CD8-positive, alpha-beta T cell (primary cell): ENCODE measurements at regions of chr1 and their contacts with region 1.

Region 1: DNA sequence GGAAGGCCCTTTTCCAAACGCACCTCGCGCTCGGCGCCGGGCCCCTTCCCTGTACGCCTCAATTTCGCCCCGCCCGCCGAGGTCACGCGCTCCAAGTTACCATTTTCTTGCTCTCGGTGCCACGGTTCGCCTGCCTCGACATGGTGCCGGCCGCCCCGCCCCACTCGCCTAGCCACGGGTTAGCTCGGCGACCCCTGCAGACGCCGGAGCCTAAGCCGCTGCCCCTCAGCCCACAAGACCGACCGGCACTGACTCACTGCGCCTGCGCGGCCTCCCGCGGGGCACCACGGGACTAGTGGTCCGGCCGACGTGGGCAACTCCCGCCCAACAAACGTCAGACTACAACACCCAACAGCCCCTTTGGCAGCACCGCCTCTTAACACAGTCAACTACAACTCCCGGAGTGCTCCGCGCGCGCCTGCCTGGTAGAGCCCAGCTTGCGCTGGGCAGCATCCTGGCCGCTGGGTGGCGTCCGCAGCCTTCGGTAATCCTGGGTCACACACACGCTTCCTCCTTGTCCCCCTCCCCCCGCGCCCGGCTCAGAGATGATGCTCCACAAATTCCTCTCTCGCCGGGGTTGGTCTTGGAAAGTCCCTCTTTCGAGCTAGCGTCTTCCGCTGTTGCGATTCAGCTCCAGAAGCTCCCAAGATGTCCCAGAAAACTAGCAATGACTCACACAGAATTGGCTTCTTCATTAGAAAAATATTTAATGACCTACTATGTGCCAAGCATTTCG is at the start of gene TRAPPC3:
- DNase-seq: peak; percentile 98 to 100 (median 99)
- ATAC-seq: peak; percentile 90
- H3K4me3 ChIP-seq: peak within 1 kb of the TSS; percentile 73 to 84
- H3K4me3 Mint-ChIP-seq: peak within 1 kb of the TSS; percentile 99
- H3K27ac ChIP-seq: peak within 1 kb of the TSS; percentile 69 to 94
- H3K27ac Mint-ChIP-seq: peak within 1 kb of the TSS; percentile 100
- H3K4me1 ChIP-seq: peaks cover 51% of the 10 kb centered on the region
- H3K4me1 Mint-ChIP-seq: peaks cover 73% of the 10 kb centered on the region
- H3K27me3 ChIP-seq: no peaks in the 10 kb centered on the region
- H3K27me3 Mint-ChIP-seq: no peaks in the 10 kb centered on the region
- CTCF ChIP-seq: peak; percentile 73
- total RNA-seq, gene TRAPPC3: 18.4 to 21.6 TPM

Region 2: GRCh38 chr1:35737120-35737519 is 412.3 kb before region 1 on chr1:
- CTCF ChIA-PET with region 1: no interaction called
- POLR2A ChIA-PET with region 1: no interaction called
- intact Hi-C with region 1: no loop called
- DNase-seq: no peak
- ATAC-seq: no peak
- H3K4me3 ChIP-seq: no peak overlapping the region
- H3K4me3 Mint-ChIP-seq: no peak overlapping the region
- H3K27ac ChIP-seq: no peak overlapping the region
- H3K27ac Mint-ChIP-seq: no peak overlapping the region
- H3K4me1 ChIP-seq: no peaks in the 10 kb centered on the region
- H3K4me1 Mint-ChIP-seq: no peaks in the 10 kb centered on the region
- H3K27me3 ChIP-seq: no peaks in the 10 kb centered on the region
- H3K27me3 Mint-ChIP-seq: no peaks in the 10 kb centered on the region
- CTCF ChIP-seq: no peak

Region 3: DNA sequence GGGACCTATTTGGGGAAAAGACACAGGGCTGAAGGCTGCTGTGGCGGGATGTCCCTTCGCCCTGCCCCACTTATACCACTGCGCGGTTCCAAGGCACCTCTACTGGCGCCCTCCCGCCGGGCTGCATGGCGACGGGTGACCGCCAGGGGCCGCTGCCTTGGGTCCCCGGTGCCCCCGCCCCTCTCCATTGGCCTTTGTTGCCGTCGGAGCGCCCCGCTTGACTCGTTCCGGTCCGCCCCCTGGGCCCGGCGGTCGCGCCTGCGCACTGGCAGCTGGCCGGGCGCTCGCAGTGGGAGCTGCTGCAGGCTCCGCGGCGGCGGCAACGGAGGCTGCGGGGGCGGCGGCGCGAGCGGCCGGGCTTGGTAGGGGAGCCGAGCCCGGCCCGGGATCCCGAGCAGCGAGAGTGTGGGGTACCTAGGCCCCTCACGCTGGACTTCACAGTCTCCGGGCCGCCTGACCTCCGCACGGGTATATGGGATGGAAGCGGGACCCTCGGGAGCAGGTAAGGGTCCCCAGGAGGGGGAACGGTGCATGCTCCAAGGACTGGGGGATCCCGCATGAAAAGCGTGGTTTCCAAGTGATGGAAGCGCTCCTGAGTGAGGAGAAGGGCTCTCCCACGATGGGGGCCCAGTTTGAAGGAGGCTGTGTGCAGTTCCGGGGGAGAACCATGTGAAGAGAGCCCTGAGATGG is 266.3 kb before region 1 on chr1 and contains the start of gene AGO1:
- CTCF ChIA-PET with region 1: no interaction called
- POLR2A ChIA-PET with region 1: no interaction called
- intact Hi-C with region 1: loop called in 1 of 2 experiments (anchors 2 kb)
- DNase-seq: peak; percentile 94 to 99 (median 97)
- ATAC-seq: peak; percentile 99
- H3K4me3 ChIP-seq: peak within 1 kb of the TSS; percentile 99 to 100
- H3K4me3 Mint-ChIP-seq: peak within 1 kb of the TSS; percentile 92
- H3K27ac ChIP-seq: peak within 1 kb of the TSS; percentile 59 to 68
- H3K27ac Mint-ChIP-seq: peak within 1 kb of the TSS; percentile 69
- H3K4me1 ChIP-seq: peaks cover 23% of the 10 kb centered on the region
- H3K4me1 Mint-ChIP-seq: peaks cover 52% of the 10 kb centered on the region
- H3K27me3 ChIP-seq: peaks cover 0 to 3% of the 10 kb centered on the region in 2 experiments
- H3K27me3 Mint-ChIP-seq: peaks cover 3% of the 10 kb centered on the region
- CTCF ChIP-seq: peak; percentile 77
- total RNA-seq, gene AGO1: 15.8 TPM

Region 4: GRCh38 chr1:36099681-36100341 is 49.6 kb before region 1 on chr1:
- CTCF ChIA-PET with region 1: interaction called, 15 read pairs
- POLR2A ChIA-PET with region 1: interaction called, 4 read pairs
- intact Hi-C with region 1: loop called (anchors 1 kb)
- DNase-seq: peak; percentile 55 to 89 (median 80)
- ATAC-seq: peak; percentile 88
- H3K4me3 ChIP-seq: peak overlapping the region in 1 of 2 experiments; percentile 7
- H3K4me3 Mint-ChIP-seq: no peak overlapping the region
- H3K27ac ChIP-seq: no peak overlapping the region
- H3K27ac Mint-ChIP-seq: no peak overlapping the region
- H3K4me1 ChIP-seq: peaks cover 8% of the 10 kb centered on the region
- H3K4me1 Mint-ChIP-seq: peaks cover 4% of the 10 kb centered on the region
- H3K27me3 ChIP-seq: no peaks in the 10 kb centered on the region
- H3K27me3 Mint-ChIP-seq: no peaks in the 10 kb centered on the region
- CTCF ChIP-seq: peak; percentile 83

Region 5: GRCh38 chr1:36160949-36161485 is 11.6 kb after region 1 on chr1:
- CTCF ChIA-PET with region 1: interaction called, 95 read pairs
- POLR2A ChIA-PET with region 1: interaction called, 78 read pairs
- intact Hi-C with region 1: loop called (anchors 1 kb)
- DNase-seq: peak; percentile 25 to 84 (median 68)
- ATAC-seq: peak; percentile 9
- H3K4me3 ChIP-seq: peak overlapping the region; percentile 52 to 59
- H3K4me3 Mint-ChIP-seq: peak overlapping the region; percentile 76
- H3K27ac ChIP-seq: peak overlapping the region; percentile 87 to 93
- H3K27ac Mint-ChIP-seq: peak overlapping the region; percentile 91
- H3K4me1 ChIP-seq: peaks cover 61% of the 10 kb centered on the region
- H3K4me1 Mint-ChIP-seq: peaks cover 71% of the 10 kb centered on the region
- H3K27me3 ChIP-seq: no peaks in the 10 kb centered on the region
- H3K27me3 Mint-ChIP-seq: no peaks in the 10 kb centered on the region
- CTCF ChIP-seq: no peak

Region 6: GRCh38 chr1:36223993-36224536 is 74.7 kb after region 1 on chr1 and contains the start of gene THRAP3:
- CTCF ChIA-PET with region 1: interaction called, 23 read pairs
- POLR2A ChIA-PET with region 1: interaction called, 26 read pairs
- intact Hi-C with region 1: loop called (anchors 1 kb)
- DNase-seq: peak; percentile 99 to 100 (median 100)
- ATAC-seq: peak; percentile 86
- H3K4me3 ChIP-seq: peak within 1 kb of the TSS; percentile 86 to 87
- H3K4me3 Mint-ChIP-seq: peak within 1 kb of the TSS; percentile 97
- H3K27ac ChIP-seq: peak within 1 kb of the TSS; percentile 97 to 100
- H3K27ac Mint-ChIP-seq: peak within 1 kb of the TSS; percentile 100
- H3K4me1 ChIP-seq: peaks cover 34% of the 10 kb centered on the region
- H3K4me1 Mint-ChIP-seq: peaks cover 34% of the 10 kb centered on the region
- H3K27me3 ChIP-seq: no peaks in the 10 kb centered on the region
- H3K27me3 Mint-ChIP-seq: no peaks in the 10 kb centered on the region
- CTCF ChIP-seq: no peak
- total RNA-seq, gene THRAP3: 83.2 to 88.4 TPM

Region 7: GRCh38 chr1:36369061-36369861 is 219.9 kb after region 1 on chr1:
- CTCF ChIA-PET with region 1: interaction called, 5 read pairs
- POLR2A ChIA-PET with region 1: no interaction called
- intact Hi-C with region 1: loop called (anchors 2 to 5 kb)
- DNase-seq: peak; percentile 75 to 91 (median 85)
- ATAC-seq: peak; percentile 62
- H3K4me3 ChIP-seq: no peak overlapping the region
- H3K4me3 Mint-ChIP-seq: no peak overlapping the region
- H3K27ac ChIP-seq: peak overlapping the region in 1 of 2 experiments; percentile 25
- H3K27ac Mint-ChIP-seq: peak overlapping the region; percentile 79
- H3K4me1 ChIP-seq: peaks cover 55% of the 10 kb centered on the region
- H3K4me1 Mint-ChIP-seq: peaks cover 68% of the 10 kb centered on the region
- H3K27me3 ChIP-seq: no peaks in the 10 kb centered on the region
- H3K27me3 Mint-ChIP-seq: no peaks in the 10 kb centered on the region
- CTCF ChIP-seq: peak; percentile 88

Region 8: DNA sequence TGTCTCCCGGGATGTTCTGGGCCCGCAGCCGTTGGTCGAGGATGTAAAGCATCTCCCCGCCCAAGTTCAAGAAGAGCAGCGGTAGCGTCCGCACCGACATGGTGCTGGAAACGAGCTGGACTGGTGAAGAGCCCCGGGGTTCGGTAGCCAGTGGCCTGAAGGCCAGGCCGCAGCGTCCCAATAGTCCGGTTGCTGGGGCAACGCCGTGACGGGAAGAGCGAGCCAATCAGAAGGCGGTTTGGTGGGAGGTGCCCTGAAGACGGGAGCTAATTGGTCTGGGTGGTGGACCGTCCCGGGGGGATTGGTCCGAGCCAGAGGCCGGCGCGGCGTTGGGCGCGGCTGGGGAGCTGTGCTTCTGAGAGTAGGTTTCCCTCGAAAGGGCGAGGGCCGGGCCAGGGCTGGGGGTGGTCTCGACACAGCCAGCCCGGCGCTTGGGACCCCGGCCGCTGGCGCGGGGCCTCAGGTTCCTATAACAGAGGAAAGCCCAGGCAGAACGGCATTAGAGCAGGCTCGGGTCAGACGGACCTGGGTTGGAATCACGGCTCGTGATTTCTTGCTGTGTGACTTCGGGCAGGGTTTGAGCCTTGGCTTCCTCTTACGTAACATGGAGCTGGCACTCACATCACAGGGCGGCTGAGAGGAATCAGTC is 301.0 kb after region 1 on chr1 and contains the start of gene OSCP1:
- CTCF ChIA-PET with region 1: no interaction called
- POLR2A ChIA-PET with region 1: no interaction called
- intact Hi-C with region 1: loop called in 1 of 2 experiments (anchors 1 kb)
- DNase-seq: peak; percentile 74 to 94 (median 84)
- ATAC-seq: peak; percentile 97
- H3K4me3 ChIP-seq: peak within 1 kb of the TSS; percentile 74 to 76
- H3K4me3 Mint-ChIP-seq: peak within 1 kb of the TSS; percentile 95
- H3K27ac ChIP-seq: peak within 1 kb of the TSS; percentile 83 to 90
- H3K27ac Mint-ChIP-seq: peak within 1 kb of the TSS; percentile 98
- H3K4me1 ChIP-seq: peaks cover 5% of the 10 kb centered on the region
- H3K4me1 Mint-ChIP-seq: peaks cover 17% of the 10 kb centered on the region
- H3K27me3 ChIP-seq: no peaks in the 10 kb centered on the region
- H3K27me3 Mint-ChIP-seq: no peaks in the 10 kb centered on the region
- CTCF ChIP-seq: no peak
- total RNA-seq, gene OSCP1: 1.8 to 2.0 TPM